Uterus (tissue), 4 donors: ENCODE measurements at regions of chr13 and their contacts with region 1.

Region 1: GRCh38 chr13:98930151-98930591 is 47.7 kb downstream of the DOCK9 start:
- DNase-seq: no peak
- H3K4me3 ChIP-seq: no peak overlapping the region
- H3K27ac ChIP-seq: peak overlapping the region in 1 of 2 donors; percentile 33
- H3K4me1 ChIP-seq: no peaks in the 10 kb centered on the region
- H3K27me3 ChIP-seq: no peaks in the 10 kb centered on the region
- CTCF ChIP-seq: no peak
- POLR2A ChIP-seq: no peak

Region 2: DNA sequence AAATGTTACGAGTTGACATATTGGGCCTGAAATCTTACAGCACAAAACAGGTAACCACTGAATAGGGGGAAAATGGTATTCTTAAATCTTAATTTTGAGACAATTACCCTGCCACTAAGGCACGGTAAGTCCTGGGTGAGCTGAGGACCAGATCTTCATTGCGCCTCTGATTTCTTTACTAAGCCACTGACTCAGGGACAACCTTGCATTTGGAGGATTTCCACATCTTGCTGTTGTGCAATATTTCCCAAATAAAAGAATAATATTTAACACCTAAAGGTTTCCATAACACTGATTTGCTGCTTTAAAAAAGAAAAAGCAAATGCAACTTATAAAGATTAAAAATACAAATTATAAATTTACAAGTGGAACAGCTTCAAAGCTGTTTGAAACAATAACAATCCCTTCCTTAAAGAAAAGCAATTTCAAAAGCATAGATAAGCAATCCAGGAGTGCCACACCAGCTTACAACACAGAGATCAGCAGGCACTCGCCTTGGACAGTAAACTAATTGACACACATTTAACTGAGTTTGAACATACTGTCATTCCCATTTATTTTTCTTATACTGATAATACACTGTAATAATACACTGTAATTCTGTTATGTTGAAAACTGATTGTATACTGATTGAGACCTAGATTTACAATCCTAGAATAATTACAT is 127.3 kb after region 1 on chr13:
- intact Hi-C with region 1: loop called (anchors 5 kb)
- DNase-seq: peak in 1 of 2 donors; percentile 43
- H3K4me3 ChIP-seq: no peak overlapping the region
- H3K27ac ChIP-seq: peak overlapping the region; percentile 9 to 44
- H3K4me1 ChIP-seq: peaks cover 0 to 3% of the 10 kb centered on the region in 2 donors
- H3K27me3 ChIP-seq: no peaks in the 10 kb centered on the region
- CTCF ChIP-seq: no peak
- POLR2A ChIP-seq: no peak

Region 3: GRCh38 chr13:99103536-99103935 is 173.4 kb after region 1 on chr13:
- intact Hi-C with region 1: no loop called
- DNase-seq: no peak
- H3K4me3 ChIP-seq: no peak overlapping the region
- H3K27ac ChIP-seq: no peak overlapping the region
- H3K4me1 ChIP-seq: no peaks in the 10 kb centered on the region
- H3K27me3 ChIP-seq: no peaks in the 10 kb centered on the region
- CTCF ChIP-seq: no peak
- POLR2A ChIP-seq: no peak